A673 (cell line): ENCODE measurements at regions of chr17 and their contacts with region 1.

Region 1: GRCh38 chr17:65278050-65278819 is 141.1 kb downstream of the RGS9 start:
- DNase-seq: peak; percentile 78
- H3K4me3 ChIP-seq: no peak overlapping the region
- H3K27ac ChIP-seq: no peak overlapping the region
- H3K4me1 ChIP-seq: no peaks in the 10 kb centered on the region
- H3K27me3 ChIP-seq: no peaks in the 10 kb centered on the region
- CTCF ChIP-seq: peak; percentile 69

Region 2: GRCh38 chr17:65532101-65532915 is 254.1 kb after region 1 on chr17:
- CTCF ChIA-PET with region 1: no interaction called
- POLR2A ChIA-PET with region 1: no interaction called
- intact Hi-C with region 1: no loop called
- DNase-seq: no peak
- H3K4me3 ChIP-seq: no peak overlapping the region
- H3K27ac ChIP-seq: peak overlapping the region; percentile 8
- H3K4me1 ChIP-seq: peaks cover 7% of the 10 kb centered on the region
- H3K27me3 ChIP-seq: no peaks in the 10 kb centered on the region
- CTCF ChIP-seq: no peak; the same call in 1 of the 2 replicates

Region 3: GRCh38 chr17:65556014-65556909 is 278.0 kb after region 1 on chr17:
- CTCF ChIA-PET with region 1: no interaction called
- POLR2A ChIA-PET with region 1: no interaction called
- intact Hi-C with region 1: loop called (anchors 5 kb)
- DNase-seq: peak; percentile 83
- H3K4me3 ChIP-seq: no peak overlapping the region
- H3K27ac ChIP-seq: no peak overlapping the region
- H3K4me1 ChIP-seq: peaks cover 15% of the 10 kb centered on the region
- H3K27me3 ChIP-seq: no peaks in the 10 kb centered on the region
- CTCF ChIP-seq: peak; percentile 92

Region 4: GRCh38 chr17:65988081-65988850 is 710.0 kb after region 1 on chr17:
- CTCF ChIA-PET with region 1: no interaction called
- POLR2A ChIA-PET with region 1: no interaction called
- intact Hi-C with region 1: loop called (anchors 5 kb)
- DNase-seq: peak; percentile 49
- H3K4me3 ChIP-seq: no peak overlapping the region
- H3K27ac ChIP-seq: no peak overlapping the region
- H3K4me1 ChIP-seq: no peaks in the 10 kb centered on the region
- H3K27me3 ChIP-seq: no peaks in the 10 kb centered on the region
- CTCF ChIP-seq: peak; percentile 64